Activated B cell treated with CpG ODN at 0.5 μM for 24 hours (primary cell): ENCODE measurements at regions of chr4 and their contacts with region 1.

Region 1: GRCh38 chr4:1712216-1713002 is at the start of gene SLBP:
- DNase-seq: peak; percentile 97
- ATAC-seq: peak; percentile 87
- H3K4me3 Mint-ChIP-seq: peak within 1 kb of the TSS; percentile 94
- H3K27ac Mint-ChIP-seq: peak within 1 kb of the TSS; percentile 93
- H3K4me1 Mint-ChIP-seq: peaks cover 73% of the 10 kb centered on the region
- H3K27me3 Mint-ChIP-seq: no peaks in the 10 kb centered on the region
- CTCF ChIP-seq: no peak
- total RNA-seq, gene SLBP: 34.0 and 37.8 TPM in 2 replicates

Region 2: GRCh38 chr4:1683736-1684505 is 28.5 kb before region 1 on chr4 and contains the start of gene FAM53A:
- CTCF ChIA-PET with region 1: no interaction called
- POLR2A ChIA-PET with region 1: interaction called, 5 read pairs
- intact Hi-C with region 1: loop called (anchors 1 kb)
- DNase-seq: peak; percentile 99
- ATAC-seq: peak; percentile 95
- H3K4me3 Mint-ChIP-seq: peak within 1 kb of the TSS; percentile 86
- H3K27ac Mint-ChIP-seq: peak within 1 kb of the TSS; percentile 69
- H3K4me1 Mint-ChIP-seq: peaks cover 10% of the 10 kb centered on the region
- H3K27me3 Mint-ChIP-seq: no peaks in the 10 kb centered on the region
- CTCF ChIP-seq: no peak
- total RNA-seq, gene FAM53A: 0.81 and 1.2 TPM in 2 replicates

Region 3: GRCh38 chr4:1726146-1726934 is 13.9 kb after region 1 on chr4:
- CTCF ChIA-PET with region 1: interaction called, 4 read pairs
- POLR2A ChIA-PET with region 1: interaction called, 138 read pairs
- intact Hi-C with region 1: loop called (anchors 1 kb)
- DNase-seq: peak; percentile 85
- ATAC-seq: peak; percentile 49
- H3K4me3 Mint-ChIP-seq: no peak overlapping the region
- H3K27ac Mint-ChIP-seq: peak overlapping the region; percentile 36
- H3K4me1 Mint-ChIP-seq: peaks cover 44% of the 10 kb centered on the region
- H3K27me3 Mint-ChIP-seq: no peaks in the 10 kb centered on the region
- CTCF ChIP-seq: peak; percentile 94

Region 4: GRCh38 chr4:1948892-1949436 is 236.6 kb after region 1 on chr4:
- CTCF ChIA-PET with region 1: no interaction called
- POLR2A ChIA-PET with region 1: no interaction called
- intact Hi-C with region 1: no loop called
- DNase-seq: no peak
- ATAC-seq: no peak
- H3K4me3 Mint-ChIP-seq: no peak overlapping the region
- H3K27ac Mint-ChIP-seq: no peak overlapping the region
- H3K4me1 Mint-ChIP-seq: no peaks in the 10 kb centered on the region
- H3K27me3 Mint-ChIP-seq: no peaks in the 10 kb centered on the region
- CTCF ChIP-seq: no peak

Region 5: GRCh38 chr4:2290974-2291704 is 578.7 kb after region 1 on chr4:
- CTCF ChIA-PET with region 1: no interaction called
- POLR2A ChIA-PET with region 1: interaction called, 10 read pairs
- intact Hi-C with region 1: no loop called
- DNase-seq: peak; percentile 38
- ATAC-seq: peak; percentile 74
- H3K4me3 Mint-ChIP-seq: peak overlapping the region; percentile 66
- H3K27ac Mint-ChIP-seq: peak overlapping the region; percentile 70
- H3K4me1 Mint-ChIP-seq: peaks cover 19% of the 10 kb centered on the region
- H3K27me3 Mint-ChIP-seq: no peaks in the 10 kb centered on the region
- CTCF ChIP-seq: no peak